ENCODE measurements at regions of chr10 and their contacts with region 1.

Region 1: DNA sequence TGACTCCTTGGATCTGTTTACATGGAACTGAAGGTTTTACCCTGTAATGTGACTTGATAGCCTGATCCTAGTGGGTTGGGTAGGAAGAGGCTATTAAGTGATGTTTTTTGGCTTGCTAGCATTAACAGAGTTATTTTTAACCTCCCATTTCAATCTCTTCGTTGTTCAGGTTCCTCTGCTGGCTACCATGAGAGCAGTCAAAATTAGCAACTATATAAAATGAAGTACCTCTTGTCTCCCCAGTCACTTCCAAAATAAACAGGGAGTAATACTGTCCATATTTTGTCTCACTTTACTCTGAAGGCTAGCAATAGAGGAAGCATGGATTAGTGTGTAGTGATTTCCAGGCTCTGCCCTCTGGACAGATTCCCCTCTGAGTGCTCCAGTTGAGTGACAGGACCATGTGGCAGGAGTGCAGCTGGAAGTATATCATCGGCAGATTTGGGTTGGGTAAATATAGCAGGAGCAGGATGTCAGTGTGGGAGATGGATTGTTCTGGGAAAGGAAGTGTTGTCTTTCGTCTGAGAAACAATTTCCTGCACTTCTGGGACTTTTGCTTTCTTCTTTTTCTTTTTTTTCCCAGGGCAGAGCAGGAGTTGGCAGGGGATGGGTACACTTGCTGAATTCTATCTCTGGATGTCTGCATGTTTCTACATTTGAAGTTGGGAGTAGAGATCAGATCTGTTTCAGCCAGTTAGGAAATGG is 35.2 kb downstream of the GBF1 start:
- DNase-seq: no peak
- ATAC-seq: peak; percentile 91

Region 2: DNA sequence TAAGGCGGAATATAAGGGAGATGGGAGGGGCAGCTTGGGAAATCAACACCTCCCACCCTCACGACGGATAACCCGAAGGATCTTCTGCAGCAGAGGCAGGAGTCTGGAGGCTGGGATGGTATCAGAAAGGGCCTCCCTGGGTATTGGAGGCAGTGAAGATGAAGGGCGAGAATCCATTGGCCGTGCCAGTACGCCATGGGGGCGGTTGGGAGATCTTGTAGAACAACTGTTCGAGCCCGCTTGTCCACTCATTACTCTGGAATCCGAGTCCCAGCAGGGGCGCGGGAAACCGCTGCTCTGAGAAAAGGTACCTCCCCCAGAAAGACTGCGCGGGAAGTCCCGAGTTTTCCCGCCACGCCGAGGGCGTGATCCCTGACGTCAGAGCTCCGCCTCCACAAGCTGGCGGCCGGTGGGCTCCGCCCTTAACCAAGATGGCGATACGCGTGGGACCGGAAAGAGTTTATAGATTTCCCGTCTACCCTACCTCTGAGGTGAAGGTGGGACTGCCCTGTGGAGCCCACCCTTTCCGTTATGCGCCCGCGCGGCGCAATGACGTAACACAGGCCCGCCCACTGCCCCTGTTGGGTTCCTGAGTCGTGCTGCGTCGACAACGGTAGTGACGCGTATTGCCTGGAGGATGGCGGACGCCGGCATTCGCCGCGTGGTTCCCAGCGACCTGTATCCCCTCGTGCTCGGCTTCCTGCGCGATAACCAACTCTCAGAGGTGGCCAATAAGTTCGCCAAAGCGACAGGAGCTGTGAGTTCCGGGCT is 128.6 kb before region 1 on chr10 and contains the start of gene NOLC1:
- intact Hi-C with region 1: no loop called
- DNase-seq: peak; percentile 99
- ATAC-seq: peak; percentile 99
- total RNA-seq, gene NOLC1: 25.8 TPM

Region 3: DNA sequence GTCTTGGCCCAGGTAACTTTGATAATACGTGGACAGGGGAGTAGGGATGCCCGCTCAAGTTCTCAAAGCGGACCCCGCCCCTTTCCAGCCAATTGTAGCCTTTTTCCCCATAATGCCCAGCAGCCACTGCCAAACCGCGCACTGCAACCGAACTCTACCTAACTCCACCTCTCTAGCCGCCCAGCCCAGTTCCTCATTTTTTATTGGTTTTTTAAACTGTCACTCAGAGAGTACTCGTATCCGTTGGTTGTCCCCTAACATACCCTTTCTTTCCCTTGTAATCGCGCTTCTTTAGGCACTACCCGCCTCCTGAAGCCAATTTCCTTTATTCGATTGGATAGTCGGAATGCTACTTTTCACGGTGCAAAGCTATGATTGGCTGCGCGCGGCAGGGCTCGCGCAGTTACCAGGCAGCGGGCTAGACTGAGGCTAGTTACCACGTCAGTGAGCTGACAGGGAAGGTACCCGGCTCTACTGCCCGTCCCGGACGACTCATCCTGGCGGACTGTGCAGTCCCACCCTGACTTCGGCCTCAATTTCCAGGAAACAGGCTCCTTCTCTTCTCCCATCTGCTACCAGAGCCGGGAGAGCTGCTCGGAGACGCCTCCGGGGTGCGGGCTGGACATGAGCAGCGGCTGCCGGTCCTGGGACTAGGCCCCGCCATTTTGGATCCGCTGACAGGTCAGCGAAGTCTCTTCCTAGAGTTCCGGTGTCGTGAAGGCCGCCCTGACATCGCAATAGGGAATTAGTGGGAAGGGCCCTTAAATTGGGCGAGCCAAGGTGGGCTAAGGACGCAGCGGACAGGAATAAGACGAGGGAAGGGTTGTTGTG is 35.2 kb before region 1 on chr10 and contains the start of gene GBF1:
- intact Hi-C with region 1: loop called (anchors 5 kb)
- DNase-seq: peak; percentile 96
- ATAC-seq: peak; percentile 90
- total RNA-seq, gene GBF1: 44.0 TPM

Region 4: GRCh38 chr10:102334101-102334500 is 53.6 kb after region 1 on chr10:
- intact Hi-C with region 1: loop called (anchors 2 kb)
- DNase-seq: no peak
- ATAC-seq: peak; percentile 87

Region 5: GRCh38 chr10:102394079-102394800 is 113.7 kb after region 1 on chr10:
- intact Hi-C with region 1: no loop called
- DNase-seq: peak; percentile 98
- ATAC-seq: peak; percentile 94

Region 6: GRCh38 chr10:102945449-102946361 is 665.2 kb after region 1 on chr10:
- intact Hi-C with region 1: no loop called
- DNase-seq: no peak
- ATAC-seq: no peak